CD8-positive, alpha-beta memory T cell (primary cell): ENCODE measurements at regions of chr5 and their contacts with region 1.

Region 1: GRCh38 chr5:54517174-54518092 is at the start of gene SNX18:
- DNase-seq: peak; percentile 88 to 95 (median 91)
- H3K4me3 ChIP-seq: peak within 1 kb of the TSS; percentile 68
- H3K4me3 Mint-ChIP-seq: peak within 1 kb of the TSS; percentile 86 to 97 (median 89)
- H3K27ac ChIP-seq: peak within 1 kb of the TSS; percentile 76
- H3K27ac Mint-ChIP-seq: peak within 1 kb of the TSS in 6 of 8 donors; percentile 35 to 88 (median 47)
- H3K4me1 ChIP-seq: peaks cover 37% of the 10 kb centered on the region
- H3K4me1 Mint-ChIP-seq: peaks cover 24 to 39% (median 35%) of the 10 kb centered on the region in 3 donors
- H3K27me3 ChIP-seq: no peaks in the 10 kb centered on the region
- H3K27me3 Mint-ChIP-seq: no peaks in the 10 kb centered on the region
- total RNA-seq, gene SNX18: 21.5 to 23.9 TPM

Region 2: DNA sequence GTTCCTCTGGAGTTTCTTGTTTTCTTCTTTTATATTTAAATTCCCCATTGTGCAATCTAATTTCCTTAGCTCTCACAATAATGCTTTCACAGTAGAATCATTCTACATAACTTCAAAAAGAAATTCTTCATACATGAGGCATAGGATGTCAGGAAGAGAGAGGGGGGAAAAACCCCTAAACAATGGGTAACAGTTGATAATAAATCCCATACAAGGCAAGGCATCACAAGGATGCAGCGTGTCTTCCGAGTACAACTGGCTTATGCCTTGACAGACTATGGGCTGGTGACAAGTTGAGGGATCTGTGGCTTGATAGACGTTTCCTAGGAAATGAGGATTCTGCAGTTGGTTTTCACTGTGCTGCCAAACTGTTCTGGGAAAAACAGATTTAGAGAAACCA is 454.5 kb before region 1 on chr5:
- CTCF ChIA-PET with region 1: no interaction called
- POLR2A ChIA-PET with region 1: no interaction called
- DNase-seq: no peak
- H3K4me3 ChIP-seq: no peak overlapping the region
- H3K4me3 Mint-ChIP-seq: no peak overlapping the region
- H3K27ac ChIP-seq: no peak overlapping the region
- H3K27ac Mint-ChIP-seq: no peak overlapping the region
- H3K4me1 ChIP-seq: no peaks in the 10 kb centered on the region
- H3K4me1 Mint-ChIP-seq: no peaks in the 10 kb centered on the region
- H3K27me3 ChIP-seq: no peaks in the 10 kb centered on the region
- H3K27me3 Mint-ChIP-seq: no peaks in the 10 kb centered on the region

Region 3: DNA sequence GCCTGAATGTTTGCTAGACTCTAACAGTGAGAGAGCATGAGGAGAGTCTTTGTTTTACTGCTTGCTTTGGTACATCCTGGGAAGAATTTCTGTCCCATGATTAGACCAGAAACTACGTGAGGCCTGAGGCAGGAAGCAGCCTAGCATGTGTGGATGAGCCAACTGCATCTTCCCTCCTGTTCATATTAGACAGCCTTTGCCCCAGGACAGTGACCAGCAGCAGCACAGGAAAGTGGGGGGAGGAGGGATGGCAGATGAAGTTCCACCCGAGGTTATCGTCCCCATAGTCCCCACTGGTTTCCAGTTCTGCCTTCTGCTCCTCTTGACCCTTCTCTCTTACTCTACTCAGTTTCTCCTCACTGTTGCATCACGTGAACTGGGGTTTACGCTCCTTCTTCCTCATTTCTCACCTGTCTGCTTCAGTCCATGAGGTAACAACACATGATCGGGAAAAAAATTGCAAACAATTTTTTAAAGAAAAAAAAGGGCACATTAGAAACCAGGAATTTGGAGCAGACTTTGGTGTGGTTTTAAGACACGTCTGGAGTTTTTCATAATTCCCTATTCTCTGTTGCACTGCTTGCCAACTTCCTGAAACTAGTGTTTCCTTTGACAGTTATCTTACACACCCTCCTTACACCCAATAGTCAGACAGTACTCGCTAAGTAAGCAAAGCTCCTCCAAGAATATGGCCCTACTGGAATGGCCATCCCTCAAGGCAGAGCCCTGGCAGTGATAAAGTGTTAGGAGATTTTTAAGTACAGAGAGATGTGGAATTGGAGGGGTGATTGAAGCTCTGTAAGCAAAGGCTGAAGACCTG is 84.2 kb after region 1 on chr5:
- CTCF ChIA-PET with region 1: no interaction called
- POLR2A ChIA-PET with region 1: no interaction called
- DNase-seq: no peak
- H3K4me3 ChIP-seq: no peak overlapping the region
- H3K4me3 Mint-ChIP-seq: no peak overlapping the region
- H3K27ac ChIP-seq: no peak overlapping the region
- H3K27ac Mint-ChIP-seq: no peak overlapping the region
- H3K4me1 ChIP-seq: no peaks in the 10 kb centered on the region
- H3K4me1 Mint-ChIP-seq: peaks cover 2 to 5% (median 4%) of the 10 kb centered on the region in 3 donors
- H3K27me3 ChIP-seq: no peaks in the 10 kb centered on the region
- H3K27me3 Mint-ChIP-seq: no peaks in the 10 kb centered on the region

Region 4: DNA sequence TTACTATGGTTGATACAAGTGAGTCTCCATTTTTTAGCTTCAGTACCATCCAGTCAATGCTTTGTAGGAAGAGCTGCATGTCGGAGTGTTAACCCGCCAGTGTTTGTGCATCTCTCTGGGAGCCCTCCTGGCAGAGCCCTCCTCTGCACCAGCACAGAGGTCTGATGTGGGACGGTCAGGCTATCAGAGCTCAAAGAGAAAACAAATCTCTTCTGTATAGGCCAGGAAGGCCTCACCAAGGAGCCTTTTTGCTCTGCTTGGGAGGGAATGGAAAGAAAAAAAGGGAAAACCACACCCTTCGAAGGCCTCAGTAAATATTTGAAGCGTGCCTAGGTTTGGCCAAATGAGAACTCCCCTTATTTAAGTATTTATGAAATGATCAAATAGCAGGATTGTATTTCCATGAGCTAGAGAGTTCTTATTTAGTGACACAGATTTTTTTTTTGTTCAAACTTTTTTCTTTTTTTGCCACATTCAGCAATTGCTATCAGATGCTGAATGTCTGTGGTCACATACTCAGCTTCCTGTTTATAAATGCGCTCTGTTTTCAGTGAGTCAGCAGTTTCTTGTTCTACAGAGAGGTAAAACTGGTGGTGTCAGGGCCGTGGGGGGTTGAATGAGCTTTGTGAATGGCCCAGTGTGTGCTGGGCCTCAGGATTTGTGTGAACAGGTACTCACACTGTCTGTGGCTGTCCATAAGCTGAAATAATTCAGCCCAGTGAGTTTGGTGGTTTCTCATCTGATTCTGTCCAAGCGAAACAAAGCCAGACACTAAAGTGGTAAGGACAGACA is 226.8 kb after region 1 on chr5:
- CTCF ChIA-PET with region 1: interaction called, 10 read pairs
- POLR2A ChIA-PET with region 1: interaction called, 6 read pairs
- DNase-seq: peak; percentile 17 to 73 (median 48)
- H3K4me3 ChIP-seq: no peak overlapping the region
- H3K4me3 Mint-ChIP-seq: peak overlapping the region; percentile 1 to 77 (median 55)
- H3K27ac ChIP-seq: peak overlapping the region; percentile 44
- H3K27ac Mint-ChIP-seq: peak overlapping the region; percentile 18 to 93 (median 83)
- H3K4me1 ChIP-seq: peaks cover 37% of the 10 kb centered on the region
- H3K4me1 Mint-ChIP-seq: peaks cover 36 to 55% (median 47%) of the 10 kb centered on the region in 3 donors
- H3K27me3 ChIP-seq: no peaks in the 10 kb centered on the region
- H3K27me3 Mint-ChIP-seq: peaks cover 0 to 2% of the 10 kb centered on the region in 2 donors

Region 5: DNA sequence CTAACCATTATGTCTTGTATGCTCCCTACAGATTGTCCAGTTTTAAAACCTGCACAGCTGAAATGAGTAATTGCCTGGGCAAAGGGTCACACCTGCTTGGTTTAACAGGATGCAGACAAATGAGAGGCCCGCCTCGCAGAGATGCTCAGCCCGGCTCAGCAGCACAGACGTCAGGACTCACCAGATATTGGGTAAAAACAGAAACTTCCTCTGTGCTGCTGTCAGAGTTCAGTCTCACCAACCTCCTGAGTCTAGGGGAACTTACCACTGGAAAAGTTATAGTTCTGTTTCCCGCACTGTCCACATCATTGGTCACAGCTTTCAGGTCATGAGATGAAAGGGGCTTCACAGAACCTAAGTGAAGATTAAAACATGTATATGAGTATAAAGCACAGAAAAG is 315.4 kb after region 1 on chr5:
- CTCF ChIA-PET with region 1: interaction called, 12 read pairs
- POLR2A ChIA-PET with region 1: no interaction called
- DNase-seq: no peak
- H3K4me3 ChIP-seq: no peak overlapping the region
- H3K4me3 Mint-ChIP-seq: no peak overlapping the region
- H3K27ac ChIP-seq: no peak overlapping the region
- H3K27ac Mint-ChIP-seq: peak overlapping the region in 4 of 8 donors; percentile 30 to 63 (median 48)
- H3K4me1 ChIP-seq: no peaks in the 10 kb centered on the region
- H3K4me1 Mint-ChIP-seq: peaks cover 16 to 33% (median 18%) of the 10 kb centered on the region in 3 donors
- H3K27me3 ChIP-seq: no peaks in the 10 kb centered on the region
- H3K27me3 Mint-ChIP-seq: peaks cover 0 to 1% of the 10 kb centered on the region in 2 donors

Region 6: GRCh38 chr5:54852007-54852406 is 334.6 kb after region 1 on chr5:
- CTCF ChIA-PET with region 1: interaction called, 41 read pairs
- POLR2A ChIA-PET with region 1: no interaction called
- DNase-seq: no peak
- H3K4me3 ChIP-seq: no peak overlapping the region
- H3K4me3 Mint-ChIP-seq: no peak overlapping the region
- H3K27ac ChIP-seq: no peak overlapping the region
- H3K27ac Mint-ChIP-seq: no peak overlapping the region
- H3K4me1 ChIP-seq: no peaks in the 10 kb centered on the region
- H3K4me1 Mint-ChIP-seq: no peaks in the 10 kb centered on the region
- H3K27me3 ChIP-seq: no peaks in the 10 kb centered on the region
- H3K27me3 Mint-ChIP-seq: peaks cover 23 to 40% of the 10 kb centered on the region in 2 donors

Region 7: GRCh38 chr5:54867310-54867944 is 350.0 kb after region 1 on chr5:
- CTCF ChIA-PET with region 1: interaction called, 80 read pairs
- POLR2A ChIA-PET with region 1: interaction called, 7 read pairs
- DNase-seq: peak in 2 of 5 donors; percentile 51 to 52
- H3K4me3 ChIP-seq: peak overlapping the region; percentile 10
- H3K4me3 Mint-ChIP-seq: peak overlapping the region in 6 of 7 donors; percentile 0 to 69 (median 40)
- H3K27ac ChIP-seq: no peak overlapping the region
- H3K27ac Mint-ChIP-seq: peak overlapping the region in 1 of 8 donors; percentile 4
- H3K4me1 ChIP-seq: peaks cover 6% of the 10 kb centered on the region
- H3K4me1 Mint-ChIP-seq: peaks cover 4 to 9% (median 6%) of the 10 kb centered on the region in 3 donors
- H3K27me3 ChIP-seq: no peaks in the 10 kb centered on the region
- H3K27me3 Mint-ChIP-seq: peaks cover 10 to 22% of the 10 kb centered on the region in 2 donors